ENCODE measurements at regions of chr10 and their contacts with region 1.

Region 1: GRCh38 chr10:15209827-15210509 is 41.5 kb upstream of the NMT2 start:
- DNase-seq: peak; percentile 70
- H3K4me3 ChIP-seq: peak overlapping the region; percentile 30
- H3K27ac ChIP-seq: peak overlapping the region; percentile 19
- H3K4me1 ChIP-seq: peaks cover 12% of the 10 kb centered on the region
- H3K27me3 ChIP-seq: no peaks in the 10 kb centered on the region
- CTCF ChIP-seq: peak; percentile 93

Region 2: DNA sequence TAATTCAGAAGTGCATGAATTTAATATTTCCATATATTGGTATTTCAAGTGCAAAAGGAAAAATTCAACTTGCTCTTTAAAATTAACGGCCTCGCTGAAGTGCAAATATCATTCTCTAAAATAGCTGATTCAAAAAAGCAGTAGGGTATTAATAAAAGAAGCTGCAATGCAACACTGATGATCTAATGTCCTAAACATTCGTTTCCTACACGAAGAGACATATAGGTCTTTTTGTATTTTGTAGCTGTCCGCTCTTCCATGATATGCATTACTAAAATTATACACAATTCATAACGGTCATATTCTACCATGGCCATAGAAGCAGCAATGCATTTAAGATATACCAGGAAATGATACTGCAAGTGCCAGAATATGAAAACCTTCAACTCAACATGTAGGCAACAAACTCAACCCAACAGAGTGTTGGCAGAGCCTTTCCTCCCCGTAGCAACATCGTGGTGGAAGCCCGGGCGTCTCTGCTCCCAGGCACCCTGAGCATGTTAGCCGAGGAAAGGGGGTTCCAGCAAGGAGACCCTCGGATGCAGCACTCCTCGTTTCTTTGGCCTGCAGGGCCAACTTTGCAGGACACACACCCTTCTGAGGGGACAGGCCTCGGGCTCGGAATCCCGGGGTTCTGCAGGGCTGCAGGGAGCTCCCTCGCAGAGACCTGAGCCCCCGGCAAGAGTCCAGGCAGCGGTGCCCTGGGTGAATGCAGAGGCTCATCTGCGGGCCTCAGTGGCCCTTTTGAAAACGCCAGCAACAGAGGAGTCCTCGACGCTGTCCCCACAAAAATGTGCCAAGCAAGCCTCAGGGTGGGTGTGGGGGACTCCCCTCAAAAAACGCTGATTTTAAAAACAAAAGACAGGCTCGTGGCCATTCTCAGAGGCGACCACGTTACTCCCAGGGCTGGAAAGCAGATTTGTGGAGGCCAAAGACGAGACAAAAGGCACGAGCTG is 159.6 kb after region 1 on chr10:
- intact Hi-C with region 1: loop called (anchors 10 kb)
- DNase-seq: peak; percentile 26
- H3K4me3 ChIP-seq: peak overlapping the region; percentile 76
- H3K27ac ChIP-seq: peak overlapping the region; percentile 78
- H3K4me1 ChIP-seq: peaks cover 45% of the 10 kb centered on the region
- H3K27me3 ChIP-seq: no peaks in the 10 kb centered on the region
- CTCF ChIP-seq: no peak